Activated CD8-positive, alpha-beta T cell treated with anti-CD3 and anti-CD28 coated beads, Interleukin-2, amount 10 ng/mL, durations not matched to agents 7 days and 5 days (primary cell): ENCODE measurements at regions of chr17 and their contacts with region 1.

Region 1: GRCh38 chr17:40191237-40192208 is 14.3 kb downstream of the RAPGEFL1 start:
- DNase-seq: peak; percentile 74
- ATAC-seq: peak; percentile 90
- H3K4me3 Mint-ChIP-seq: peak overlapping the region; percentile 92
- H3K27ac Mint-ChIP-seq: peak overlapping the region; percentile 66
- H3K4me1 Mint-ChIP-seq: peaks cover 27% of the 10 kb centered on the region
- H3K27me3 Mint-ChIP-seq: peaks cover 5% of the 10 kb centered on the region

Region 2: DNA sequence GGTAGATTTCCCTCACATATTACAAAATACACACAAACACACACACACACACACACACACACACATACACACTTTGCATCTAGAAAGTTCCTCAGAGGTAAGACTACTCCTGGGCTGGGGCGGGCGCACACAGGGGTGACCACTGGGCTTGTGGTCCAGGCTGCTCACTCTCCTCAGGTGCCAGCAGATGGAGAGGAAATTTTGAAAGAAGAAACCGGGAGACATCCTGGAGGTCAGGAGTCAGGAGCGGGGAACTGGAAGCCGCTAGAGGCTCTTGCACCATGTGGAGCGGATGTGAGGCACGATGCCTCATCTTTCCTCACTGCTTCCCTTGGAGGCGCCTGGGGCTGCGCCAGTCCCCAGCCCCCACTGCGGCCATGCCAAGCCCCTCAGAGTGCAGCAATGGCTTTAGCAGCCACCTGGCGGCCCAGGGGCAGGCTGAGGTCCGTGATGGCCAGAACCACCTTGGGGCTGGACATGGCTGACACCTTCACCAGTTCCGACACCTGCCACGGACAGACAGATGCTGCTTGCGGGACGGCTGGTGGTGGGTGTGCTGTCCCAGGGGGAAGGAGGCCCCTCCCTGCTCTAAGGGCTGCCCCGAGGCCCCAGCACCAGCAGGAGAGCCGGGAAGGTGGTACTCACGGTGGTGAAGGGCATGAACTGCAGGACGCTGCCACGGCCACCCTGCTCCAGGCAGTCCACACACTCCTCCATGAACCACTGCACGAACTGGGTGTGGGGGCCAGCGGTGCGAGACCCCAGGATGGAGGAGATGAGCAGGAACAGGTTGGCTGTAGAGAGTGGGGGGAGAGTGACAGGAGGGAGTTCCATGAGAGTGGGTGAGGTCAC is 172.2 kb before region 1 on chr17:
- CTCF ChIA-PET with region 1: interaction called, 14 read pairs
- POLR2A ChIA-PET with region 1: no interaction called
- DNase-seq: no peak
- ATAC-seq: no peak
- H3K4me3 Mint-ChIP-seq: no peak overlapping the region
- H3K27ac Mint-ChIP-seq: no peak overlapping the region
- H3K4me1 Mint-ChIP-seq: peaks cover 3% of the 10 kb centered on the region
- H3K27me3 Mint-ChIP-seq: no peaks in the 10 kb centered on the region

Region 3: GRCh38 chr17:40063187-40063771 is 128.2 kb before region 1 on chr17:
- CTCF ChIA-PET with region 1: no interaction called
- POLR2A ChIA-PET with region 1: no interaction called
- DNase-seq: peak; percentile 38
- ATAC-seq: no peak
- H3K4me3 Mint-ChIP-seq: peak overlapping the region; percentile 80
- H3K27ac Mint-ChIP-seq: peak overlapping the region; percentile 46
- H3K4me1 Mint-ChIP-seq: peaks cover 39% of the 10 kb centered on the region
- H3K27me3 Mint-ChIP-seq: peaks cover 27% of the 10 kb centered on the region

Region 4: GRCh38 chr17:40177275-40177874 is 14.1 kb before region 1 on chr17 and contains the start of gene RAPGEFL1:
- CTCF ChIA-PET with region 1: interaction called, 21 read pairs
- POLR2A ChIA-PET with region 1: interaction called, 3 read pairs
- DNase-seq: peak; percentile 88
- ATAC-seq: peak; percentile 95
- H3K4me3 Mint-ChIP-seq: peak within 1 kb of the TSS; percentile 18
- H3K27ac Mint-ChIP-seq: peak within 1 kb of the TSS; percentile 28
- H3K4me1 Mint-ChIP-seq: peaks cover 9% of the 10 kb centered on the region
- H3K27me3 Mint-ChIP-seq: no peaks in the 10 kb centered on the region
- total RNA-seq, gene RAPGEFL1: 4.8 to 5.3 TPM

Region 5: GRCh38 chr17:40203131-40203530 is 11.6 kb after region 1 on chr17:
- CTCF ChIA-PET with region 1: interaction called, 39 read pairs
- POLR2A ChIA-PET with region 1: no interaction called
- DNase-seq: no peak
- ATAC-seq: no peak
- H3K4me3 Mint-ChIP-seq: no peak overlapping the region
- H3K27ac Mint-ChIP-seq: no peak overlapping the region
- H3K4me1 Mint-ChIP-seq: peaks cover 9% of the 10 kb centered on the region
- H3K27me3 Mint-ChIP-seq: peaks cover 4% of the 10 kb centered on the region

Region 6: GRCh38 chr17:40209404-40210093 is 18.0 kb after region 1 on chr17:
- CTCF ChIA-PET with region 1: interaction called, 39 read pairs
- POLR2A ChIA-PET with region 1: no interaction called
- DNase-seq: no peak
- ATAC-seq: no peak
- H3K4me3 Mint-ChIP-seq: no peak overlapping the region
- H3K27ac Mint-ChIP-seq: no peak overlapping the region
- H3K4me1 Mint-ChIP-seq: no peaks in the 10 kb centered on the region
- H3K27me3 Mint-ChIP-seq: peaks cover 2% of the 10 kb centered on the region

Region 7: DNA sequence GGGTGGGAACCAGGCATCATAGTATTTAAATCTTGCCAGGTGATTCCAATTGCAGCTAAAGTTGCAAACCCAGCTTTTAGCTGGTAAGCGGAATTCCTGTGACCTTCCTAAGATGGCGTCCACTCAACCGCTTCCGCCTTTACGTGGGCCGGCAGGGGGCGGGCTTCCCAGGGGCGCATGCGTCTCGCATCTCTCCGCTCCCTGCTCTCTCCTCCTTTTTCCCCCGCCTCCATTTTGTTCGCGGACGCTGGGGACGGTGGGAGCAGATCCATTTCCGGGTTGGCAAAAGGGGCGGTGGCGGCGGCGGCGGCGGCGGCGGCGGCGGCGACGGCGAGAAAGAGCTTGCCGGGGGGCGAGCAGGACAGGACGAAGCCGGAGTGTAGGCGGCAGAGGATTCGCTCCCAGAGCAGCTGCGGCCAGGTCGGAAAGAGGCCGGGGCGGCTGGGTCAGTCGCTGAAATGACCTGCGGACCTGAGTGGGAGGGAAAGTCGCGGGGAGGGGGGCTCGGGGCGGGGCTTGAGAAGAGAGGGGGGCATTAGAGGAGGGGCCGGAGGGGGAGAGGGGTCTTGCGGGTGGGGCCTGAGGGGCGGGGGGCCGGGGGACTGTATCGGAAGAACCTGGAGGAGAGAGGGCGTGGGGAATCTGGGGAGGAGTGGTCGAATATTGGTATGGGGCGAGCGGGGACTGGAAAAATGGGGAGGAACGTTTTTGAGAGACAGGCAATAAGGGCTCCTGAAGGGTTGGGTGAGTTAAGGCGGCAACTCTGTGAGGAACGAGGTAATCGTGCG is 27.7 kb after region 1 on chr17 and contains the start of gene WIPF2:
- CTCF ChIA-PET with region 1: interaction called, 19 read pairs
- POLR2A ChIA-PET with region 1: interaction called, 11 read pairs
- DNase-seq: peak; percentile 98
- ATAC-seq: peak; percentile 95
- H3K4me3 Mint-ChIP-seq: peak within 1 kb of the TSS; percentile 82
- H3K27ac Mint-ChIP-seq: peak within 1 kb of the TSS; percentile 99
- H3K4me1 Mint-ChIP-seq: peaks cover 22% of the 10 kb centered on the region
- H3K27me3 Mint-ChIP-seq: no peaks in the 10 kb centered on the region
- total RNA-seq, gene WIPF2: 22.0 to 27.4 TPM

Region 8: DNA sequence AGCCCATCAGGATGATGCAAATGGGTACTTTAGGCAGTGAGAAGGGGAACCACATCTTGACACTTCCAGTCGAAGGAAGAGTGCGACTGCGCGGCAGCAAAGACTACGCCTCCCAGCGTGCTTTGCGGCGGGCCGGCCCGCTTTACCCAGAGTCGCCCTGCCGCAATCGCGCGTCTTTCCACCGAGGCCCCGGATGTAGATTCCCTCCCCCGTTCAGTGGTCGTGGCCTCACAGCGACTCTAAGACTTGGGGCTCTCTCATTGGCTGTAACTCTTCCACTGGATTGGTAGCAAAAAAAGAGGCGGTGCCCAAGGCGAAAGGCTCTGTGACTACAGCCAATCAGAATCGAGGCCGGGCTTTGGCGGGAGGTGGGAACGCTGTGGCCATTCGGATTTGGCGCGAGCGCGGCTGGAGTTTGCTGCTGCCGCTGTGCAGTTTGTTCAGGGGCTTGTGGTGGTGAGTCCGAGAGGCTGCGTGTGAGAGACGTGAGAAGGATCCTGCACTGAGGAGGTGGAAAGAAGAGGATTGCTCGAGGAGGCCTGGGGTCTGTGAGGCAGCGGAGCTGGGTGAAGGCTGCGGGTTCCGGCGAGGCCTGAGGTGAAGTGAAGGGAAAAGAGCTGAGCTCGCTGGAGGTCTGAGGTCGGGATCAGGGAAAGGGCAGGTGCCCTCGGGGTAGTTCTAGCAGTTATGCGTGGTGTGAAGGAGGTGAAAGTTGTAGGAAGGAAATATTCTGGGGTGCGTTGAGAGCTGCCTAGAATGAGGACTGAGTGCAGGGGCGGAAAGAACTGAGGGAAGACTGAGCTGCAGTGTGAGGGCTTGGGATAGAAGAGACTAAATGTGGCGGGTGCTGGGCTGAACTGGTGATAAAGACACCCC is 96.2 kb after region 1 on chr17 and contains the start of gene CDC6:
- CTCF ChIA-PET with region 1: interaction called, 10 read pairs
- POLR2A ChIA-PET with region 1: interaction called, 6 read pairs
- DNase-seq: peak; percentile 100
- ATAC-seq: peak; percentile 96
- H3K4me3 Mint-ChIP-seq: peak within 1 kb of the TSS; percentile 98
- H3K27ac Mint-ChIP-seq: peak within 1 kb of the TSS; percentile 97
- H3K4me1 Mint-ChIP-seq: peaks cover 45% of the 10 kb centered on the region
- H3K27me3 Mint-ChIP-seq: no peaks in the 10 kb centered on the region
- total RNA-seq, gene CDC6: 103 to 110 TPM